Tibial artery (tissue), 4 donors: ENCODE measurements at regions of chr7 and their contacts with region 1.

Region 1: DNA sequence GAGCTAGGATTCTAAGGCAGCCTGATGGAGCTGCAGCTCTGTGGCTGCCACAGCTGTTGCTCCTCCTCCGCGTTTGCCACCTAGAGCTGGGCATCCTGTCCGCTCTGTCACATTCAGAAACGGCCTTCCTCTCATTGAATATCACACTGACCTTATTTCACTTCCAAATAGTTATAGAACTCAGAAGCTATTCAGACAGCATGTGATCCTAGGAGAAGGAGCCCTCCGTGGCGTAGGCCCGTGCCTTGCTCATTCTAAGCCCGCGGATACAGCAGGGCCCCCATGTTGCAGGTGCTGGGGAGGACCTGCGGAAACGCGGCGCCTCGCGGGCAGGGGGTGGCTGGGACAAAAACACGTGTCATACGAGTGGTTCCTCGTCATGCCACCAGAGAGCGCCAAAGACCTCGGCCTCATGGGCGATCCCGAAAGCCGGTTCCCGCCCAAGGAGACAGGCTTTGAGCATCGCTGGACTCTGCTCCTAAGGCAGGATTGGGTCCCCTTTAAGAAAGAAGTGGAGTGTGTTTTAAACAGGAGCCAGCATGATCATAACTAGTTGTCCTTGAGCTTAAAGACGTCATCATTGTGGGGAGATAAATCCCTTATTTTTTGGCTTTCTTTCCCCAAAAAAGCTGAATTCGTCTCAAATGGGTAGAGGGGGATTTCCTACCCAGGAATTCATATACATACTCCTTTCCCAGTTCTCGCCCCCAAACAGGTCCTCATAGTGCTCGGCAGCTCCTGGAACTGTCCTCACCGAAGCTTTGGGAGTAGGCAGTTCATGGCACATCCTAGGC is 17.9 kb upstream of the FIGNL1 start:
- DNase-seq: peak; percentile 73 to 84
- H3K4me3 ChIP-seq: no peak overlapping the region
- H3K27ac ChIP-seq: no peak overlapping the region
- H3K4me1 ChIP-seq: peaks cover 0 to 8% (median 4%) of the 10 kb centered on the region in 4 donors
- H3K27me3 ChIP-seq: peaks cover 0 to 5% of the 10 kb centered on the region in 2 donors
- CTCF ChIP-seq: peak; percentile 90 to 94

Region 2: GRCh38 chr7:50679218-50680007 is 211.4 kb after region 1 on chr7:
- intact Hi-C with region 1: loop called (anchors 5 kb)
- DNase-seq: no peak
- H3K4me3 ChIP-seq: no peak overlapping the region
- H3K27ac ChIP-seq: no peak overlapping the region
- H3K4me1 ChIP-seq: peaks cover 0 to 53% (median 36%) of the 10 kb centered on the region in 4 donors
- H3K27me3 ChIP-seq: no peaks in the 10 kb centered on the region
- CTCF ChIP-seq: peak; percentile 33 to 50

Region 3: GRCh38 chr7:51141451-51142003 is 673.5 kb after region 1 on chr7:
- intact Hi-C with region 1: loop called (anchors 2 kb)
- DNase-seq: no peak
- H3K4me3 ChIP-seq: no peak overlapping the region
- H3K27ac ChIP-seq: no peak overlapping the region
- H3K4me1 ChIP-seq: no peaks in the 10 kb centered on the region
- H3K27me3 ChIP-seq: peaks cover 0 to 3% of the 10 kb centered on the region in 2 donors
- CTCF ChIP-seq: peak; percentile 34 to 47